Ovary (tissue), 10 donors: ENCODE measurements at regions of chr9 and their contacts with region 1.

Region 1: GRCh38 chr9:84781458-84781857 is 111.9 kb downstream of the NTRK2 start:
- DNase-seq: peak in 3 of 5 donors; percentile 28 to 37 (median 31)
- H3K4me3 ChIP-seq: no peak overlapping the region
- H3K27ac ChIP-seq: no peak overlapping the region
- H3K4me1 ChIP-seq: no peaks in the 10 kb centered on the region
- H3K27me3 ChIP-seq: no peaks in the 10 kb centered on the region
- CTCF ChIP-seq: peak; percentile 22 to 51 (median 28)
- EP300 ChIP-seq: no peak
- POLR2A ChIP-seq: no peak

Region 2: GRCh38 chr9:84411683-84412267 is 369.7 kb before region 1 on chr9:
- intact Hi-C with region 1: loop called in 1 of 4 experiments (anchors 5 kb)
- DNase-seq: no peak
- H3K4me3 ChIP-seq: no peak overlapping the region
- H3K27ac ChIP-seq: peak overlapping the region in 1 of 2 donors; percentile 53
- H3K4me1 ChIP-seq: peaks cover 5% of the 10 kb centered on the region
- H3K27me3 ChIP-seq: no peaks in the 10 kb centered on the region
- CTCF ChIP-seq: no peak
- EP300 ChIP-seq: no peak
- POLR2A ChIP-seq: no peak